HCT116 (cell line): ENCODE measurements at regions of chr22 and their contacts with region 1.

Region 1: GRCh38 chr22:43110444-43110926 is at the start of gene BIK:
- DNase-seq: no peak
- ATAC-seq: peak; percentile 81
- H3K4me3 ChIP-seq: peak within 1 kb of the TSS; percentile 65 to 83
- H3K27ac ChIP-seq: peak within 1 kb of the TSS; percentile 74; the same call in 1 of the 2 replicates
- H3K4me1 ChIP-seq: peaks cover 8 to 18% of the 10 kb centered on the region in 2 experiments
- H3K27me3 ChIP-seq: no peaks in the 10 kb centered on the region
- CTCF ChIP-seq: no peak
- POLR2A ChIP-seq: peak; percentile 53
- RAD21 ChIP-seq: peak; percentile 11; the same call in 1 of the 2 replicates
- total RNA-seq, gene BIK: 31.0 TPM

Region 2: GRCh38 chr22:43126480-43127165 is 16.1 kb after region 1 on chr22:
- CTCF ChIA-PET with region 1: interaction called, 3 read pairs
- POLR2A ChIA-PET with region 1: interaction called, 28 read pairs
- RAD21 ChIA-PET with region 1: interaction called in 1 of 2 experiments, 3 read pairs
- intact Hi-C with region 1: no loop called
- DNase-seq: peak; percentile 82
- ATAC-seq: peak; percentile 84
- H3K4me3 ChIP-seq: peak overlapping the region; percentile 71 to 76
- H3K27ac ChIP-seq: peak overlapping the region; percentile 99
- H3K4me1 ChIP-seq: peaks cover 37 to 61% of the 10 kb centered on the region in 2 experiments
- H3K27me3 ChIP-seq: no peaks in the 10 kb centered on the region
- CTCF ChIP-seq: no peak
- POLR2A ChIP-seq: no peak
- RAD21 ChIP-seq: no peak; the same call in 1 of the 2 replicates

Region 3: GRCh38 chr22:43363315-43364168 is 253.1 kb after region 1 on chr22:
- CTCF ChIA-PET with region 1: no interaction called
- POLR2A ChIA-PET with region 1: no interaction called
- RAD21 ChIA-PET with region 1: no interaction called
- intact Hi-C with region 1: no loop called
- DNase-seq: no peak
- ATAC-seq: no peak
- H3K4me3 ChIP-seq: no peak overlapping the region
- H3K27ac ChIP-seq: no peak overlapping the region
- H3K4me1 ChIP-seq: no peaks in the 10 kb centered on the region
- H3K27me3 ChIP-seq: peaks cover 15% of the 10 kb centered on the region
- CTCF ChIP-seq: no peak
- POLR2A ChIP-seq: no peak
- RAD21 ChIP-seq: no peak